Ascending aorta (tissue), 2 donors: ENCODE measurements at regions of chr19 and their contacts with region 1.

Region 1: DNA sequence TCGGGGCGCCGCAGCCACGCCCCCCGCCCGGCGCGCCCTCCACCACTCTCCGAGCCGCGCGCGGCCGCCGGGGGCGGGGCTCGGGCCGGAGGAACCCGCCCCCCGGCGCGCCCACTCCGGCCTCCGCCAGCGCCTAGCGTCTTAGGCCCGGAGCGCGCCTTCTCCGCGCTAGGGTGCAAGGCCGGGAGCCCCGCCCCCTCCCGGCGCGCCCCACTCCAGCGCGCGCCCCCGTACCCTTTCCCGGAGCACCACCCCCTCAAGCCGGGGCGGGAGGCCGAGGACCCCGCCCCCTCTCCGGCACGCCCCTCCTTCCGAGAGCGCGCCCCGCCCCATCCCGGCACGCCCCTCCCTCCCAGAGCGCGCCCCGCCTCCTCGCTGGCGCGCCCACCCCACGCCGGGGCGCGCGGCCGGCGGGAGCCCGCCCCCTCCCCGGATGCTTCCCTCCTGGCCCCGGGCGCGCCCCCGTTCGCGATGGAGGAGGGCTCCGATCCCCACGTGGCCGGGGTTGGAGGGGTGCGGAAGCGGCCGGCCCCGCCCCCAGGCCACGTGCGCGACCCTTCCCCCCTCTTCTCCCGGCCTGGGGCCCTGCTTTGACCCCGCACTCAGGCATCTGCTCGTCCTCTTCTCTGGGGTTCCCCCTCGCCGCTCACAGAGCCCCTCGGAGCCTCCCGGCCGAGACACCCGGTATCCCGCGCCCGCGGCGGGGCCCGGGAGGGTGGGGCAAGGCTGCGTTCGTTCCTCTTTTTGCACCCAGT is 524 bp upstream of the KLF16 start:
- DNase-seq: peak; percentile 57 to 92
- H3K4me3 ChIP-seq: peak overlapping the region; percentile 59 to 80
- H3K27ac ChIP-seq: peak overlapping the region; percentile 77 to 84
- H3K4me1 ChIP-seq: peaks cover 13 to 15% of the 10 kb centered on the region in 2 donors
- H3K27me3 ChIP-seq: no peaks in the 10 kb centered on the region
- CTCF ChIP-seq: no peak

Region 2: GRCh38 chr19:1875646-1876495 is 12.0 kb after region 1 on chr19:
- intact Hi-C with region 1: loop called (anchors 1 kb)
- DNase-seq: peak; percentile 71 to 96
- H3K4me3 ChIP-seq: peak overlapping the region; percentile 90 to 98
- H3K27ac ChIP-seq: peak overlapping the region; percentile 93 to 98
- H3K4me1 ChIP-seq: peaks cover 17 to 31% of the 10 kb centered on the region in 2 donors
- H3K27me3 ChIP-seq: no peaks in the 10 kb centered on the region
- CTCF ChIP-seq: no peak

Region 3: DNA sequence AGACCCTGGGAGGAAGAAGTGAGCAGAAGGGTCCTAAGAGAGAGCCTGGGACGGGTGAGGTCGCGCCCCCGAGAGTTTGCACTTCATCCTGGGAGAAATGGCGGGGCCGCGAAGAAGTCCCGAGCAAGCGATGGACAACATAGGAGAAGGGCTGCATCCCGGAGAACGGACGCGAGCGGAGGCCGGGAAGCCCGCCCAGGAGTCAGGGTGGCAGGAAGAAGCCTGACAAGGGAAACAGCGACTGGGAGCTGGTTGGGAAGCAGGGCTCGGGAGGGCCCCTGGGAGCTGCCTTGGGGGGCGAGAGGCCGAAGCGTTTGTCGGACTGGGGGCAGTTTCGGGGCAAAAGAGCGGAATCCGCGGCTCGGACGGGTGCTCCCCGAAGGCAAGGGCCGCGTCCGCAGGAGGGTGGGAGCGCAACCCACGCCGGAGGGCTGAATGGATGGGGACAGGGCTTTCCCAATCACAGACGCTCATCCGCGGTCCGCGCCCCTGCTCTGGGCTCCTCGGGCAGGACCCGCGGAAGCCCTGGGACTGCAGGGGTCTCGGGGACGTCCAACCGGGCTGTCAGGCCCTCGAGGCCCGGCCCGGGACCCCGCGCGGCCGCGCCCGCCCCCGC is 20.9 kb after region 1 on chr19:
- intact Hi-C with region 1: loop called (anchors 2 kb)
- DNase-seq: no peak
- H3K4me3 ChIP-seq: peak overlapping the region; percentile 93 to 100
- H3K27ac ChIP-seq: peak overlapping the region; percentile 84 to 88
- H3K4me1 ChIP-seq: peaks cover 15 to 26% of the 10 kb centered on the region in 2 donors
- H3K27me3 ChIP-seq: no peaks in the 10 kb centered on the region
- CTCF ChIP-seq: peak in 1 of 3 experiments; percentile 1

Region 4: DNA sequence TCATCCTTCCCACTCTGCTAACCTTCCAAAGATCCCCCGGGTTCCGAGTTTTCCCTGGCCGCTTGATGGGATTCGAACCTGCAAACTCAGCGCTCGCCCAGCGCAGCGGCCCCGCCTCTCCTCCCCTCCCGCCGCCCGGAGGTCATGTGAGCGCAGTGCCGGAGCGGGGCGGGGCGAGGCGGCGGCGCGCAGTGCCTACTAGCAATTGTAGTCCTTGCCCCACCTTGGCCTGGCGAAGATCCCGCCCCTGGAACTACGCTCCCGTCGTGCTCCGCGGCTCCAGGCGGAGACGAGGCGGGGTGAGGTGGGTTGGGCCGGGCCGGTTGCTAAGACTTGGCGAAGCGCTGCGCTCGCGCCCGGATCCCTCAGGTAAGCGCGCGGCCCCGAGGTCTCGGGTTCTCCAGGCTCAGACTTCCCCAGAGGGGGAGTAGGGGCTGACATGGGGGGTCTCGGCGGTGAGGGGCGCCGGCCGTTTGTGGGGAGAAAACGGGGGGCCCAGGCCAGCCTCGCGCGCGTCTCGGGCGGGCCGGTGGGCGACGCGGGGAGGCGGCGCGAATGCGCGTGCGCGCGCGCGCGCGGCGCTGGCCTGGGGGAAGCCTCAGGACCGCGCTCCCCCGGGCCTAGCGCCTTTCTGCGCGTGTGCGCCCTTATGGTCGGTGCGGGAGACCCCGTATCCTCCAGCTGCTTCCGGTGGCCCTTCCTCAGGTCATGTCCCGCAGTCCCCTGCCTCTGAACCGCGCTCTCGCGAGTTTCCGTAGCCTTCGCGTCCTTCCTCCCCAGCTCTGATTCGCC is 41.4 kb after region 1 on chr19 and contains the starts of genes ADAT3 and SCAMP4:
- intact Hi-C with region 1: loop called (anchors 1 kb)
- DNase-seq: peak; percentile 94 to 99
- H3K4me3 ChIP-seq: peak within 1 kb of the TSS; percentile 73 to 82
- H3K27ac ChIP-seq: peak within 1 kb of the TSS; percentile 74 to 81
- H3K4me1 ChIP-seq: peaks cover 8 to 13% of the 10 kb centered on the region in 2 donors
- H3K27me3 ChIP-seq: no peaks in the 10 kb centered on the region
- CTCF ChIP-seq: no peak
- total RNA-seq, gene ADAT3: 18.4 TPM
- total RNA-seq, gene SCAMP4: 322 TPM

Region 5: DNA sequence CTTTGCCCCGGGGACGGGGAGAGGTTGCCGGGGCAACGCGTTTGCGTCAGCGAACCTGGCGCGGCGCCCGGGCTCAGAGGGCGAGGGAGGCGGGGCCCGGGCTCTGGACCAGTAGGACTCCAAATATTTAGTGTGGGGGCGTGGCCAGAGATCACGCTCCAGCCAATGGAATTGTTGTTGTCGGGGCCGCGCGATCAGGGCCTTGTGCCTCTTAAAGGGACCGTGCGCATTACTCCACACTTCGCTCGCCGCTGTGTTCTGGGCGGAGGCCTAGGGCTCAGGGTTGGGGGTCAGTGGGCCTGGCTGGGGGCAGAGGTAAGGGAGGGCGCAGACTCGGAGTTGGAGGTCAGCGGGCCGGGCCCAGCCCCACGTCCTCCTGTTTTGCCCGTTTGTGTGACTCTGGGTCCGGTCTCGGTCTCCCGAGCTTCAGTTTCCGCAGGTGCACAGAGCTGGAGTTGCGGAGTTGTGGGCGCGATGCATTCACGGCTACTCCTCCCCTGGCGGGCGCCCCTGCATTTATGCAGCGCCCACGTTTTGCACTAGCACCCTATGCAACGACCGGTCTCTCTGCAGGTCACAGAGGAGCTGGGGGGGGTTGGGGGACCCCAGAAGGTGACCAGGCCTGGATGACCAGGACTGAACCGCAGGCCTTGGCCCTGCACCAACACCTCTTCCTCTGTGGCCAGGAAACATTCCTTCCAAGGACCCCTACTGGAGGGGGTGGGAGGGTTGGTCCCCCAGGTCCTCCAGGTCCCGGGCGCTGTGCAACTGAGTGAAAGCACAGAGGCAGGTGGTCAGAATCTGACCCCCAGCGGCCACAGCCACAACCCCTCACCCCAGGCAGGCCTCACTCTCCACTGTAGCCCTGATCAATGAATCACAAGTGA is 197.8 kb after region 1 on chr19:
- intact Hi-C with region 1: no loop called
- DNase-seq: peak; percentile 97 to 99
- H3K4me3 ChIP-seq: peak overlapping the region; percentile 70 to 85
- H3K27ac ChIP-seq: peak overlapping the region; percentile 98 to 99
- H3K4me1 ChIP-seq: peaks cover 12 to 36% of the 10 kb centered on the region in 2 donors
- H3K27me3 ChIP-seq: no peaks in the 10 kb centered on the region
- CTCF ChIP-seq: no peak

Region 6: DNA sequence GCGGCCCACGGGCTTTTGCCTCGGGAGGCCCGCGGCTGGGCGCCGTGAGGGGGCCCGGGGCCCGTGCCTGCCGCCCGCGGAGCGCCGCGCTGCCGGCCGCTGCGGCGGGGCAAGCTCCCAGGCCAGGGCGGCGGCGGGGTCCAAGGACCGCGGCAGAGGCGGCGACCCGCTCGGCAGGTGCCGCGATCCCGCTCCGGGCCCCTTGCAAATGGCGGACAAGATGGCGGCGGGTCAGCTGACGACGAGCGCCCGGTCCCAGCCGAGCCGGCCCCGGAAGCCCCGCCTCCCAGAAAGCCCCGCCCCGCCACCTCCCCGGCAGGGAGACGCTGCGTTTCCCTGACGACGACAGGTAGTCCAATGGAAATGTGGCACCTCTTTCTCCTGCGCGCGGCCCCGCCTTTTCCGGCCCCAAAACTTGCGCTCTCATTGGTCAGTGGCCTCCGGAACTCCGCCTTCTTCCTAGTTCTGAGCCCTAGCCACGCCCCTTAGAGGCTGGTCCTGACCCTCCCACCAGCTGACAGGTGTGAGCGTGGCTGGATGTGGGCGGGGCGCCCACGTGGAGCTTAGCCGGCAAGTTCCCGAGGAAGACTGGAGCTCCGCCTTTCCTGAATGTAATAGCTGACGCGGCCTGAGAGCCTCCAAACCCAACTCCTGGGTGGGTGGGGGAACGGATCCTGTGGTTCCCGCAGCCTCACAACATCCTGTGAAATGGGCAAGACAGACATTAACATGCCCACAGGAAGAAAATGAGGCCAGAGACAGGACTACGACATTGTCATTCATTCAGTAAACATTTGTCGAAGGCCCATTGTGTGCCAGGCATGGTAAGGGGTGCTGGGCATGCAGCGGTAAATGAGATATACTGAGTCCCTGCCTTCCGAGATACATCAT is 287.7 kb after region 1 on chr19 and contains the start of gene AP3D1:
- intact Hi-C with region 1: loop called (anchors 5 kb)
- DNase-seq: peak; percentile 99 to 100
- H3K4me3 ChIP-seq: peak within 1 kb of the TSS; percentile 82 to 96
- H3K27ac ChIP-seq: peak within 1 kb of the TSS; percentile 83 to 87
- H3K4me1 ChIP-seq: peaks cover 14 to 31% of the 10 kb centered on the region in 2 donors
- H3K27me3 ChIP-seq: no peaks in the 10 kb centered on the region
- CTCF ChIP-seq: peak in 1 of 3 experiments; percentile 38
- total RNA-seq, gene AP3D1: 98.8 TPM